Activated T-helper 1 cell treated with anti-CD3 and anti-CD28 coated beads, Interleukin-12 subunit alpha, Interleukin-12 subunit beta, Interleukin-2, Interleukin-4 antibody, amounts not matched to agents 30 ng/mL and 10 ng/mL and 1 ng/mL, durations not matched to agents 14 hours and 24 hours and 36 hours (primary cell): ENCODE measurements at regions of chr17 and their contacts with region 1.

Region 1: DNA sequence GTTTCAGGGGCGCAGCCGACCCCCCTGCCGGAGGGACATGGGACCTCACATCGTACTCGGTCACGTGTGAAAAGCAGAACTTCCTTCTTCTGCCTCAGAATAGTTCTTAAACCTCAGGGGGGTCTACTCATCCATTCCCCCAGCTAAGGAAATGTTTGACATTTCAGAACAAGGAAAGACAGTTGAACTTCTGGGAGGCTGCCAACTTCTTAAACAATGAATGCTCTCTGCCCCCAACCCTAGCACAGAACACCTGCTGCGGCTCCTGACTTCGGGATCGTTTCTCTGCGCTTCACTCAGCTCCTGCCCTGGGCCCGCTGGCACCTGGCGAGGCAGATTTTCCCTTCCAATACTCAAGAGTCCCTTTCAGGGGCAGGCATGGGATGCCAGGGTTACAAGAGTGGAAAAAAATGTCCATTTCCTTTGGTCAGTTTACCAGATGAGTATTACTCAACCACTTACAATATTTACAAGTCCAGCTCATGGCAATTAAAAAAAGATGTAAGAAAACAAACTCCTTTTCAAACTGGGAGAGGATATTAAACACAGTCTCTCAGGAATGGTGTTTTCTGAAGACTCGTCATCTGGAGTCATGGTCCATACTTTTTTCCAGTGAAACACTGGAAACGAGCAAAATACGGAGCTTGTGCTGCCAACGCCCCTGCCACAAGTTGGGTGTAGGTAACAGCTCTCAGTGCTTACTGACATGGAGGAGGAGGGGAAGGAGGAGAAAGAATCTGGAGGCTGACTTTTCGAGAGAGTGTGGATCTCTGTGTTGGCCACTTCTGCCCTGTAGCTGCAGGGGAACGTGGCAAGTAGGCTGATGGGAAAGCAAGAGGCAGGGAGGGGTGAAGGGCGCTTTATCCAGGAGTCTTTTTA is 235.7 kb downstream of the NTN1 start:
- DNase-seq: no peak
- H3K4me3 Mint-ChIP-seq: no peak overlapping the region
- H3K27ac Mint-ChIP-seq: no peak overlapping the region
- H3K4me1 Mint-ChIP-seq: peaks cover 13% of the 10 kb centered on the region
- H3K27me3 Mint-ChIP-seq: peaks cover 1% of the 10 kb centered on the region

Region 2: DNA sequence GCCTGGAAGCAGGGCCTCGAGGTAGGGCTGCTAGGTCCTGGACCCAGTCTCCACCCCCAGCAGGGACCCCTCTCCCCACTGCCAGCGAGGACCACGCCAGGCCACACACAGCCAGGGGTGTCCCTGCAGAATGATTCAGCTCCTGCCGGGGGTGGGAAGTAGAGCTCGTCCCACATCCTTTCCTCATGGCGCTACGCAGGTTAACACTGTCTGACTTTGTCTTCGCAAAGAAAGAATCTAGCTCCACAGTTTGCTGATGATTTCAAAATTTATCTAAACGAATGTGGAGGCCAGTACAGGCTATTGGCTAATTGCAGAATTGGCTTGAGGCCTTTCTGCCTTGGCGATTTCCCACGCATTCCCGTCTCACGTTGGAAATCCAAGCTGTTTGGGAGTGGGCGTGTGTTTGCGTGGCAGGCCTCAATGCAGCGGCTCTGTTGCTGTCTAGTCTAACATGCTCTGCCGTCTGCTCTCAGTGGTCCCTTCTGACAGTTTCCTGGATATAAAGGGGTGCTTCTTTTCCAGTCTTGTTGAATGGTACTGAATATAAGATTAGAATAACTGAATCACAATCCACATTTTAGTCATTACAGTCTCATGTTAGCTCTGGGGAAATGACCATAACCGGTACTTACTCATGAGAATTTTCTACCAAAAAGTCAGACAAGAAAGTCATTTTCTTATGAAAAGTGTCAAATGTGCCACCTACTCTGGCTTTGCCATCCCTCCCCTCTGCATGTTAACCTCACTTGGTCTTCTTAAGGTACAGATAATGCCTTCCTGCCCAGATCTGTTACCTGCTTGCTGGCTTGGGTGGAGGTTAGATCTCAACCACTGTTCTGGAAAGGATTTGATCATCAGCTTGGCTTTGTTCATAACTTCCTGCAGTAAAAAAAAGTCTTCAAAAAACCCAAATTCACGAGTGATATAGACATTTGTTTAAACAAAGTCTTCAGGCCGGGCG is 16.7 kb after region 1 on chr17:
- intact Hi-C with region 1: loop called (anchors 1 kb)
- DNase-seq: no peak
- H3K4me3 Mint-ChIP-seq: peak overlapping the region; percentile 17
- H3K27ac Mint-ChIP-seq: peak overlapping the region; percentile 77
- H3K4me1 Mint-ChIP-seq: peaks cover 18% of the 10 kb centered on the region
- H3K27me3 Mint-ChIP-seq: no peaks in the 10 kb centered on the region